GM10248 (cell line): ENCODE measurements at regions of chr12 and their contacts with region 1.

Region 1: DNA sequence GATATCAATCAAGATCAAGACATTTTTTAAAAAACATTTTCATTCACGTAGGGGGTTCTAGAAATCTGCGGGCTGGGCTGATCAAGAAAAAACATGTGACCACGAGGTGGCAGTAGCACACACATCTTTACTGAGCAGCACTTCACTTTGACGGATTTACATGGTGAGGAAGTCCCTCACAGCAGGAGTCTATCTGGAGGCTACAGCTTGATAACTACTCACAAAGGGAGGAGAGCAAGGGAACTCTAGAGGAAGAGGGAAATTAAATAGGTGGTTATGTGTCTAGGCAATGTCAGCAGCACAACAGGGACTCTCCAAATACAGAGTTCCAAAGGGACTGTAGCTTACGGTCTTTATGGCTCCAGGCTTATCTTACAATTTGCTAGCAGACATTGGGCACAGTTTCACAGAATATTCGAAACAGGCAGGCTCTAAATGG is 248.1 kb downstream of the DPY19L2 start:
- DNase-seq: peak; percentile 38
- CTCF ChIP-seq: peak; percentile 54

Region 2: GRCh38 chr12:63276537-63277365 is 143.5 kb before region 1 on chr12:
- CTCF ChIA-PET with region 1: no interaction called
- POLR2A ChIA-PET with region 1: no interaction called
- DNase-seq: peak; percentile 7
- CTCF ChIP-seq: peak; percentile 41

Region 3: DNA sequence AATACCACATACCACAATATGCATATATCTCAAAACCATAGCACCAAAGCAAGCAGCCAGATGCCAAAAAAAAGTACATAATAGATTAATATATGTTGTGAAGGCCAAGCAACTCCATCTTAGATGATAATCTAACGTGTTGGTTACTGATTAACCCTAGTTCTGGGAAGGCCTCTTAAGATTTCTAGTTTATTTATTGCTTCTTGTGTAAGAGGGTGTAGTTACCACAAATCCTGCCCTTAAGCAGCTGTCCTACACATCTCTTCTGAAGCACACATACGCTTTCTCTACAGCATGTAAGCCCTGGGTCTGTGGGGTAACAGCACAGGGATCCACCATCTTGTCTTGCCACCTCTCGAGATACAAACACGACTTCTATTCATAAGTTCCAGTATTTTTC is 32.5 kb before region 1 on chr12:
- CTCF ChIA-PET with region 1: no interaction called
- POLR2A ChIA-PET with region 1: no interaction called
- DNase-seq: no peak
- CTCF ChIP-seq: no peak

Region 4: DNA sequence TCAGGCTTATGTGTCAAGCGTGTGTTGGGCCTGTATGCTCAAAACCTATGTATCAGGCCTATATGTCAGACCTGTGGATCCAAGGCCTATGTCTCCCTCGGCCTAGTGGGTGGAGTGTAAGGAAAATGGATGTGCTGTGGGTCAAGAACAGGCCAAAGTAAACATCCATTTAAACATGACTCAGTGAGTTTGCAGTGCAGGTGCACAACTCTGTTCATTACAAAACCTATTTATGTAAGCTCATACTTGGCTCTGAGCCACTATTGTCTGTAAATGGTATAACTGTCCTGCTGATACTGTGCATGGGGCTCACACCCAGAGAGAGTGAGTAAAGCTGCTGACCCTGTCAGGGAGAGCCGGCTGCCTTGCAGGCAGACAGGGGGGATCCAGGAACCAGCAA is 19.5 kb before region 1 on chr12:
- CTCF ChIA-PET with region 1: interaction called, 10 read pairs
- POLR2A ChIA-PET with region 1: no interaction called
- DNase-seq: no peak
- CTCF ChIP-seq: no peak

Region 5: DNA sequence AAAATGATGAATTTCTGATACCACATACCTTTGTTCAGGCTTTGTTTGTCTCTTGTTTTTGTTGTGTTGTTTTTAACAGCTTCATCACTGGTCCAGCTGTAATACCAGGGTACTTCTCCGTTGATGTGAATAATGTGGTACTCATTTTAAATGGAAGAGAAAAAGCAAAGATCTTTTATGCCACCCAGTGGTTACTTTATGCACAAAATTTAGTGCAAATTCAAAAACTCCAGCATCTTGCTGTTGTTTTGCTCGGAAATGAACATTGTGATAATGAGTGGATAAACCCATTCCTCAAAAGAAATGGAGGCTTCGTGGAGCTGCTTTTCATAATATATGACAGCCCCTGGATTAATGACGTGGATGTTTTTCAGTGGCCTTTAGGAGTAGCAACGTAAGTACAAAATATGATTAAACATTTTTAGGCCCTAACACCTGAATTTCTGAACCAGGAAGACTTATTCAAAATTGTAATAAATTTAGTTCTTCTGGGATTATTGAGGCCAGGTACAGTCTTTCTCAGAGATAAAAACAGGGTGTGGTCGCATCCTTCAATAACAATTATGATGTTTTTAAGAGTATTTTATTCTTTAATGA is 381.9 kb after region 1 on chr12:
- CTCF ChIA-PET with region 1: interaction called, 14 read pairs
- POLR2A ChIA-PET with region 1: no interaction called
- DNase-seq: peak; percentile 18
- CTCF ChIP-seq: peak; percentile 33